ENCODE measurements at regions of chrX and their contacts with region 1.

Region 1: DNA sequence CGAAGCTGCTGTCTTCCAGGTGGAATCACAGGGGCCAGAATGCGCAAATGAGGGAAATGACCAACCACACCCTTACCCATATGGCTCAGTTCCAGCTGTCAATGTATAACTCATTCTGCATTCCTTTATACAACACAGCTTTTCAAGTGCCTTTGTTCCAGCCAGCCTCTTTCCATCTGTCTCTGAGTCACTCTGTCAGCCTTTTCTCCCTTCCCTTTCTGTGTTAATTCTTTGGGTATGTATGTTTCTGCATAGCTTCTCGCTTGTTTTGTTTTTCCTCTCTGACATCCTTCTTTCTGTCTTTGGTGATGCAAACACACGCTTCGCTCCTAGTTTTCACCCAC is 54.5 kb downstream of the RS1 start:
- DNase-seq: peak; percentile 66 to 70
- H3K4me3 ChIP-seq: no peak overlapping the region; the same call in 1 of the 2 replicates
- H3K4me3 Mint-ChIP-seq: peak overlapping the region; percentile 77
- H3K27ac Mint-ChIP-seq: peak overlapping the region; percentile 98
- H3K4me1 ChIP-seq: peaks cover 46% of the 10 kb centered on the region
- H3K4me1 Mint-ChIP-seq: peaks cover 23% of the 10 kb centered on the region
- H3K27me3 ChIP-seq: no peaks in the 10 kb centered on the region
- H3K27me3 Mint-ChIP-seq: no peaks in the 10 kb centered on the region
- CTCF ChIP-seq: no peak

Region 2: DNA sequence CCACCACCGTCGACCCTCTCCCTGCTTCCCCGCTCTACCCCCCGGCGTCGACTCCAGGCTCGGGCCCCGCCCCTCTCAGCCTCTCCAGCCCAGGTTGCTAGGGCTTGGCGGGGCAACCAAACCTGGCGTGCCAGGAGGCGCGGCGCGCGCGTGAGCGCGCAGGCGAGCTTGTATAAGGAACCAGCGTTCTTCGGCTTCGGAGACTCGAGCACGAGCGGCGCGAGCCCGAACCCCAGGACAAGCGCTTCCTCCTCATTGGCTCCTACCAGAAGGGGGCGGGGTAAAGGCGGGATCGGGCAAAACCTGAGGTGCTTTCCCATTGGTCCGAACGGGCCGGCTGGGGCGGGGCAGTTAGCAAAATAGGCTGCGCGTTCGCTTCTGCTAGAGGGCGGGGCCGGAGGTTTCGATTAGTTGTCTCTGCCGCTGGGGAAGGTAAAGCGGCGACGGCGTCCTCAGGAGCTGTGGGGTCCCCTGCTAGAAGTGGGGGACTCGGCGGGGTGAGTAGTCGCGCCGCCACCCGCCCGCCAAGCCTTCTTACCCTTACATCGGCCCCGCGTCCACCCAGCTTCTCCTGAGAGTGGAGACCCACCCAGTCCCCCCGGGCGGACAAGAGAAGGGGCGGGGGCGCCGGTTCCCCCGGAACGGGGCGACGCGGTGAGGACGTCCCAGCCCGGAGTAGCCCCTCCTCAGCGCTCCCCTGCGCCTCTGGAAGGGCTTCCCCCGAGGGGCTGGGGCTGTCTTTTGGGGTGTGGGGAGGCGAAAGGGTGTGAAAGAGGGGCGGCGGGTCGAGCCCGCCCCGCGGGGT is 192.0 kb before region 1 on chrX and contains the start of gene CDKL5:
- CTCF ChIA-PET with region 1: no interaction called
- POLR2A ChIA-PET with region 1: interaction called, 4 read pairs
- intact Hi-C with region 1: loop called (anchors 5 kb)
- DNase-seq: peak; percentile 96 to 97
- H3K4me3 ChIP-seq: peak within 1 kb of the TSS; percentile 71
- H3K4me3 Mint-ChIP-seq: peak within 1 kb of the TSS; percentile 92
- H3K27ac Mint-ChIP-seq: peak within 1 kb of the TSS; percentile 64
- H3K4me1 ChIP-seq: no peaks in the 10 kb centered on the region
- H3K4me1 Mint-ChIP-seq: no peaks in the 10 kb centered on the region
- H3K27me3 ChIP-seq: no peaks in the 10 kb centered on the region
- H3K27me3 Mint-ChIP-seq: no peaks in the 10 kb centered on the region
- CTCF ChIP-seq: no peak
- total RNA-seq, gene CDKL5: 23.7 and 27.2 TPM in 2 replicates

Region 3: GRCh38 chrX:18630934-18631333 is 13.6 kb after region 1 on chrX:
- CTCF ChIA-PET with region 1: no interaction called
- POLR2A ChIA-PET with region 1: no interaction called
- intact Hi-C with region 1: loop called (anchors 1 kb)
- DNase-seq: peak; percentile 49 to 56
- H3K4me3 ChIP-seq: no peak overlapping the region
- H3K4me3 Mint-ChIP-seq: peak overlapping the region; percentile 4
- H3K27ac Mint-ChIP-seq: peak overlapping the region; percentile 86
- H3K4me1 ChIP-seq: peaks cover 34% of the 10 kb centered on the region
- H3K4me1 Mint-ChIP-seq: peaks cover 19% of the 10 kb centered on the region
- H3K27me3 ChIP-seq: no peaks in the 10 kb centered on the region
- H3K27me3 Mint-ChIP-seq: no peaks in the 10 kb centered on the region
- CTCF ChIP-seq: no peak

Region 4: DNA sequence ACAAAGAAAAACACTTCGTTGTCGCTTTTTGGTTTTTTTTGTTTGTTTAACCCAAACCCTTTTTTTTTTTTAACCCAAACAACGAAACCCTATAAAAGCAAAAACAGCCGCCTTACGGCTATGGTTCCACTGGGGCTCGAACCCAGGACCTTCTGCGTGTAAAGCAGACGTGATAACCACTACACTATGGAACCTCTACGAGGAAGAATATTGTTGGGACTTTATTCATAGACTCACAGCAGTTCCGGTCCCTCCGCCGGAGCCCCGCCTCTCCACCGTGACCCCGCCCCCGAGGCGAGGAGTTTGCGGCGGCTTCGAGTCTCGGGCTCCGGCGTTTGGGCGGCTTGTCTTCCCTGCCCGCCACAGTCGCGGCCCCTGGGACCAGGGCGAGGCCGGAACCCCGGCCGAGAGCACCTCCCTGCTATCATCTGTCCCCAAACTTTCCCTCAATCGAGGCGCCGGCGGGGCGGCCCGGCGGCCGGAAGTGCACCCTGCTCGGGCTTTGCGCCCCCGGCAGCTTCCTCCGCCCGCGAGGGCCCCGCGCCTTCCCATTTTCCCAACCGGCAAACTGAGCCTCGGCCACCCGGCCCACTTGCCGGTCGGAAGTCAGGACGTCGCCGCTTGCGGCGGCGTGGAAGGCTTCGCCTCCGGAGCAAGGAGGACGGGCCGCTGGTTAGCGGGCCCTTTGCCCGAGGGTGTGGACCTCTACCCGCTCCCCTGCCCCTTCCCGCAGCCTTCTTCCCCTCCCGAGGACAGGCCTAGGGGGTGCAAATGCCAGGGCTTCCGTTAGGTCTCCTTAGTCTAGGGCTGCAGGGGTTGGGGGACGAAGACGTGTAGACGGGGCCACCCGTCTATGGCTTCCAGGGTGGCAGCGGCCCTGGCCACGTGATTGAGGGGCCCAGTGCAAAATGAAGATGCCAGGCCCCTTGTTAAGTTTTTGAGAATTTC is 57.7 kb after region 1 on chrX:
- CTCF ChIA-PET with region 1: interaction called, 3 read pairs
- POLR2A ChIA-PET with region 1: no interaction called
- intact Hi-C with region 1: loop called (anchors 2 kb)
- DNase-seq: peak; percentile 70 to 87
- H3K4me3 ChIP-seq: peak overlapping the region; percentile 54
- H3K4me3 Mint-ChIP-seq: peak overlapping the region; percentile 66
- H3K27ac Mint-ChIP-seq: peak overlapping the region; percentile 35
- H3K4me1 ChIP-seq: no peaks in the 10 kb centered on the region
- H3K4me1 Mint-ChIP-seq: peaks cover 6% of the 10 kb centered on the region
- H3K27me3 ChIP-seq: no peaks in the 10 kb centered on the region
- H3K27me3 Mint-ChIP-seq: no peaks in the 10 kb centered on the region
- CTCF ChIP-seq: no peak

Region 5: GRCh38 chrX:18721683-18722499 is 104.5 kb after region 1 on chrX:
- CTCF ChIA-PET with region 1: no interaction called
- POLR2A ChIA-PET with region 1: no interaction called
- intact Hi-C with region 1: loop called (anchors 1 kb)
- DNase-seq: peak; percentile 29 to 33
- H3K4me3 ChIP-seq: no peak overlapping the region
- H3K4me3 Mint-ChIP-seq: peak overlapping the region; percentile 33
- H3K27ac Mint-ChIP-seq: peak overlapping the region; percentile 49
- H3K4me1 ChIP-seq: peaks cover 12% of the 10 kb centered on the region; the same call in 1 of the 2 replicates
- H3K4me1 Mint-ChIP-seq: peaks cover 8% of the 10 kb centered on the region
- H3K27me3 ChIP-seq: no peaks in the 10 kb centered on the region
- H3K27me3 Mint-ChIP-seq: no peaks in the 10 kb centered on the region
- CTCF ChIP-seq: no peak

Region 6: DNA sequence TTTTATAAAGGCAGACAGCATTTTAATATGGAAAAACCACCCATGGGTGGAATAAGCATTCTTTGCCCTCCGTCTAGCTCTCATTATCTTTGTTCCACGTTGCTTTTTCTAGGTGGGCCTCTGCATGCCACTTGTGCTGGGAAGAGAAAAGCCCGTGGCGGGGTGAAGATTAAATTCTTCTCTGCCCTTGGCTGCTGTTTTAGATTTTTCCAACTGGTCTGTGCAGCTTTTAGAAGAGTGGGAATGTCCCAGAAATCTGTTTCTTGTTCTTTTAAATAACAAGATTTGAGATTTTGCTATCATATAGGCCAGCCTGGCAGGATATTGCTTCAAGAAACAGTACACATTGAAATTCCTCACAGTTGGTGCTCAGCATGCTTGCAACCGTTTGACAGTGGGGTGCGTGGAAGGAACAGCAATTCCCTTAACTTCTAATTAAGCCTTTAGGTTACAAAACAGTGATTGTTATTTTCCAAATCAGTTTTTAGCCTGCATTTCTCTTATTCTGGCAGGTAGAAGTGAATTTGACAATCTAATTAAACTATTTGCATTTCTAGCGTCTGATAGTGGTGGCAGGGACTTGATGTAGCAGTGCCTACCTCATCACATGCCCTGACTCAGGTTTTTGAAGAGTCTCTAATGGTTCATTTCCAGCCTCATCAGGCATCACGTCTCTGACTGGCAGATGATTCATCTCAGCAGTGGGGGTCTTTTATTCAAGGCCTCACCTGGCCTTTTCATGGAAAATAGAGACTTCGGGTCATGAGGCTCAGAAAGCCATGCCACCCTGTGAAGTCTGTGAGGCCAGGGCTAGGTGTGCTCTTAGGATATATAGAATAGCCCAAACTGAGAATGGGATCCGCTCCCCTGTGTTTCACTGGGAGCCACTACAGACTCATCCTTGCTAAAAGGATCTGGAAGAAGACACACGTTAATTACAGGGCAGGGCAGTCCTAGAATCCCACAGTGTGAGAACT is 140.9 kb after region 1 on chrX:
- CTCF ChIA-PET with region 1: no interaction called
- POLR2A ChIA-PET with region 1: no interaction called
- intact Hi-C with region 1: loop called (anchors 2 kb)
- DNase-seq: no peak
- H3K4me3 ChIP-seq: no peak overlapping the region
- H3K4me3 Mint-ChIP-seq: no peak overlapping the region
- H3K27ac Mint-ChIP-seq: no peak overlapping the region
- H3K4me1 ChIP-seq: peaks cover 5% of the 10 kb centered on the region
- H3K4me1 Mint-ChIP-seq: no peaks in the 10 kb centered on the region
- H3K27me3 ChIP-seq: no peaks in the 10 kb centered on the region
- H3K27me3 Mint-ChIP-seq: no peaks in the 10 kb centered on the region
- CTCF ChIP-seq: no peak

Measured in Caco-2 (cell line).